HEK293 (cell line): ENCODE measurements at regions of chr22 and their contacts with region 1.

Region 1: DNA sequence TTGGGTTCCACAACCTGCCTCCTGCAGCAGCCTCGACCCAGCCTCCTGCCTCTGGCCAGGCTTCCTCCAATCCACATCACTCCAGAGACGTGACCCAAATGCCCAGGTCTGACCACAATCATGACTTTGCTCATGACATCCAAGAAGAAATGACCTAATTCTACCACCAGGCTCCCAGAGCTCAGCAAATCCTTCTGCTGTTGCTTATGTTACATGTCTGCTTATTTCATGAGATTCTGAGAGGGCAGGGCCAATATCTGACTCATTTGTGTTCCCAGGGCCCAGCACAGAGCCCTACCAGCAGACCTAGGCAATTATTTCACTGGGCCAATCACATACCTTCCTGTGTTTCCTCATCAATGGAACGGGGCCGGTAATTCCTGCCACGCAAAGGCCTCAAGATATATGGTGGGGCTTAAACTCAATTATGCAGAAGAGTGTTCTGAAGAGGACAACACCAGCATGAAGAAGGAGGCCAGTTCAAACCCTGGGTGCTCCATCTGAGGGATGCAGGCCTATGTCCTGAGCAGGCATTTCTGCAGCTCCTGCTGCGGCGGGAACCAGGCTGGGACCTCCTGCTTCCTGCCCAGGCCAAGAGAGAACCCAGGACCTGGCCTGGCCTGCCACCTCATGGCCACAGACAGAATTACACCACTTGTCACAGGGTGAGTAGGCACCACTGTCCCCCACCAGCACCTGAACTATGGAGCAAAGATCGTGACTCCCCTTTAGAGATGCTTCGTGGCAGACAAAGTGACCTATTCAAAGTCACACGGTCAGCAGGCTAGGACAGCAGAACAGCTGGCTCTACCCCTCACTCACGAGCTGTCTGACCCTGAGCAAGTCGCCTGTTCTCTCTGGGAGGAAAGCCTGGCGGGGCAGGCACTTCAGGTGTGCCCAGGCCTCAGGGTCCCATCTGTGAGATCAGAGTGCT is 5.9 kb downstream of the CENPM start:
- H3K4me3 ChIP-seq: no peak overlapping the region
- H3K27ac ChIP-seq: 0 out of 2 replicates have a peak overlapping the region, but pooled peaks have one; percentile 12
- H3K4me1 ChIP-seq: no peaks in the 10 kb centered on the region; the same call in 1 of the 2 replicates
- CTCF ChIP-seq: peak; percentile 86

Region 2: DNA sequence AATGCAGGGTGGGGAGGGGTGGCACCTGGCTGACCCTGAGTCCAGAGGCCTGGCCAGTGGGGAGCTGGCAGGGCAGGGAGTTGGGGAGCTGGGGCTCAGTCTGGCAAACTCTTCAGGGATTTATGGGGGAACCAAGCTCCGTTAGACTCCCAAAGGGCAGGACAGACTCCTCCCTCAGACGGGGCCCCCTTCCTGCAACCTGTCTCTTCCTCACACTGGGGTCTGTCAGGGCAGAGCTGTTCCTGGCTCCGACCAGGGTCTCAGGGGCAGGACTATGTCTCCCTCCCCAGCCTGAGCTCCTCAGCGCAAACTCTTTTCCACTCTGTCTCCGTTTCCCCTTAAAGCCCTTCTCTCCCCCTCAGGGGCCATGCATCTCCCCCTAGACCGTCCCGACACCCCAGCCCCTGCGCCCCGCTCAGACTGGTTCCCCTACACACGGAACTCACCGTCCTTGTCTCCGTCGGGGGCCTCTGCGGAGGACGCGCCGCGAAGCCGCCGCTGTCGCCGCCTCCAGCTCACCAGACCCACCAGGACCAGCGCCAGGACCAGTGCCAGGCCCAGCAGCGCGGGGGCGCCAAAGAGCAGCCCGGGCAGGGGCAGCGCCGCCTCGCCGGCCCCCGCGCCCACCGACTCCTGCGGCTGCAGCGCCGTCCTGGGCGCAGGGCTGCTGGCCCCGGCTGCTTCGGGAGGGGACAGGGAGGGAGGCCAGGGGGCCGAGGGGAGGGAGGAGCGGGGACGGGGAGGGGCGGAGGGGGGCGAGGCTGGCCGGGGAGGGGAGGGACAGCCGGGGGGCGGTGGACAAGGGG is 15.2 kb before region 1 on chr22:
- CTCF ChIA-PET with region 1: interaction called, 14 read pairs
- POLR2A ChIA-PET with region 1: interaction called, 27 read pairs
- H3K4me3 ChIP-seq: peak overlapping the region; percentile 1
- H3K27ac ChIP-seq: no peak overlapping the region; the same call in 1 of the 2 replicates
- H3K4me1 ChIP-seq: peaks cover 2% of the 10 kb centered on the region; the same call in 1 of the 2 replicates
- CTCF ChIP-seq: peak; percentile 60; the same call in 1 of the 2 replicates

Region 3: GRCh38 chr22:41951898-41952474 is 10.9 kb after region 1 on chr22 and contains the start of gene SMIM45:
- CTCF ChIA-PET with region 1: interaction called, 11 read pairs
- POLR2A ChIA-PET with region 1: interaction called, 31 read pairs
- H3K4me3 ChIP-seq: no peak within 1 kb of the TSS
- H3K27ac ChIP-seq: no peak within 1 kb of the TSS
- H3K4me1 ChIP-seq: no peaks in the 10 kb centered on the region
- CTCF ChIP-seq: no peak